ENCODE measurements at regions of chr1 and their contacts with region 1.

Region 1: DNA sequence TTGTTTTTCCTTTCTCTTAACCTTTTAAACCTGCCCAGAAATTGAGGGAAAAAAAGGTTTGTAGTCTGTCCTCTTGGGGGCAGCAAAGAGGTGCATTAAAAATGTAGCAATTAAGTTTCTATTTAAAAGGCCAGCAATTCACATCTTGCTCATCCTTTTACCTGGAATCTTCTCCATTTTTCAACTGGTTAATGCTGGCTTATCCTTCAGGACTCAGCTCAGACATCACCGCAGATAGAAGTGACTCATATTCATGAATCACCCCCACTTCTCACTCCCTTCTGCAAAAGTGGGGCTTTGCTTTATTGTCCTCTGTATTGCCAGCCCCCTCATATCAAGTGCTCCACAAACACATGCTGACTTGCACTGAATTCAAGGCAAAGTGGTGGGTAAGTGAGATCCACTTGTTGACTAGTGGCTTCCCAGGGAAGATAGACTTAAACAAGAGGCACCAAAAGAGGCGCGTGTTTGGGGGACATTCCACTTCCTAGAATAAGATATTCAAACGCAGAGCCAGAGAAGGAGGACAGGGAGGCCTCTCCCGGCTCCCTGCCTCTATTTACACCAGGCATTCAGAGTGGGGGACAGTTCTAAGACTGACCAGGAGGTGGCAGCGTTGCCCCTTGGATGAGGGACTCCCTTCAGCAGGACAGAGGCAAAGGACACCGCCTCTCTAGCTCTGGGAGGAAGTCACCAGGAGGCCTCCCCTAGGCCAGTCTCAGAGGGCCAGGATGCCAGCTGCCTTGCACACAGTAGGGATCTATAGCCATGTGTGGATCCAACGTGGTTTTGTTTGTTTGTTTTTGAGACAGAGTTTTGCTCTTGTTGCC is 23.2 kb upstream of the ZNF648 start:
- DNase-seq: peak; percentile 93
- H3K4me3 Mint-ChIP-seq: no peak overlapping the region
- H3K27ac Mint-ChIP-seq: no peak overlapping the region
- H3K4me1 Mint-ChIP-seq: peaks cover 15% of the 10 kb centered on the region
- H3K27me3 Mint-ChIP-seq: no peaks in the 10 kb centered on the region
- CTCF ChIP-seq: peak; percentile 93

Region 2: DNA sequence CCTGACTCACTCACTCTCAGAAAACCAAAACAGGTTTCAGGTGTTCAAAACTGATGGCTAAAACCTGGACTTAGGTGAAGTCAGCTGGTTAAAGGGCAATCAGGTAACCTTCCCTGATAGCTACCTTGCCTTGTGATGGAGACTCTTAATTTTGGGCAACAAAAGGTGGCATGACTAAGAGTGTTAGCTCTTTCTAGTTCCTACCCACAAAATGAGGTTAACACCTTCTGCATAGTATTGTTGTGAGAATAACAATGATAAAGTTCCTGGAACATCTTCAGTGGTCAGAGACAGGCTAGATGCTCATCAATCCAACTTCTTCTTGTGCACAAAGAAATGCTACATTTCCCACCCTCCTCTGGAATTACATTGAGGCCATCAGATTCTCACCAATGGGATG is 238.0 kb before region 1 on chr1:
- CTCF ChIA-PET with region 1: no interaction called
- intact Hi-C with region 1: no loop called
- DNase-seq: no peak
- H3K4me3 Mint-ChIP-seq: no peak overlapping the region
- H3K27ac Mint-ChIP-seq: no peak overlapping the region
- H3K4me1 Mint-ChIP-seq: no peaks in the 10 kb centered on the region
- H3K27me3 Mint-ChIP-seq: no peaks in the 10 kb centered on the region
- CTCF ChIP-seq: no peak

Region 3: GRCh38 chr1:181936768-181937581 is 147.7 kb before region 1 on chr1:
- CTCF ChIA-PET with region 1: interaction called, 12 read pairs
- intact Hi-C with region 1: no loop called
- DNase-seq: peak; percentile 73
- H3K4me3 Mint-ChIP-seq: no peak overlapping the region
- H3K27ac Mint-ChIP-seq: no peak overlapping the region
- H3K4me1 Mint-ChIP-seq: no peaks in the 10 kb centered on the region
- H3K27me3 Mint-ChIP-seq: no peaks in the 10 kb centered on the region
- CTCF ChIP-seq: peak; percentile 58

Region 4: DNA sequence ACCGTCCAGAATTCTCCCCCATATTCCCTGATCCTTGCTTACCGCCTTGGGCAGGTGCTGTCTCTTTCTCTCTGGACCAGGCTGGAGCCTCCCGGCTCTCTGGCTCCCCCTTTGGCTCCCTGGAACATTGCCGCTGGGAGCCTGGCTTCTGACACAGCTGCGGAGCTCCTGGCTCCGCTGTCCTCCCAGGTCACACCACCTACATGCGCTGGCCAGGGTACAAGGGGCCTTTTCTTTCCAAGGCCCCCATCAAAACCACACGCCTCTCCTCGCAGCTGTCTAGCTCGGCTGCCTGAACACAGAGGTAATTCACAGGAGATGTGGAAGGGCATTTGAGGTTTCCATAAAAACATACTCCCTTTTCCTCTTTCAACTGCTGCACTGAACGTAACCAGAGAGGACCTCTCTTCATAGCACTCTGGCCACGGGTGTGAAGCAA is 15.7 kb before region 1 on chr1:
- CTCF ChIA-PET with region 1: interaction called, 22 read pairs
- intact Hi-C with region 1: no loop called
- DNase-seq: peak; percentile 91
- H3K4me3 Mint-ChIP-seq: peak overlapping the region; percentile 18
- H3K27ac Mint-ChIP-seq: no peak overlapping the region
- H3K4me1 Mint-ChIP-seq: no peaks in the 10 kb centered on the region
- H3K27me3 Mint-ChIP-seq: peaks cover 23% of the 10 kb centered on the region
- CTCF ChIP-seq: peak; percentile 80

Region 5: DNA sequence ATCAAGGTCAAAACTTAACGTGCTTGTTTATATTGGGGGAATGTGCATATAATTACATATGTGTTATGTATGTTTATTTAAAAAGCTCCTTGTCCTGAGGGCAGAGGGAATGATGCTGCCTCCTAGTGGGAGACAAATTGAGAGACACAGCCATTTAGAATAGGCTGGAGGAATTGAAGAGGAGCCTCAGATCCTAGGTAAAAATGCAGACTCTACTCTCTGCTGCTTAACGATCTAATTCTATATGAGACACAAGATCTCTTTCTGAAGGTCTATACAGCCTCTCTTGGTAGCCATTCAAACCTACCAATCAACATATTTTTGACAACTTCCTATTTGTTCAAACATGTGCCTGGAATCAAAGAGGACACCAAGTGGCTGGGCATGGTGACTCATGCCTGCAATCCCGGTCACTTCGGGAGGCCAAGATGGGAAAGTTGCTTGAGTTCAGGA is 113.4 kb after region 1 on chr1:
- CTCF ChIA-PET with region 1: interaction called, 4 read pairs
- intact Hi-C with region 1: loop called (anchors 1 kb)
- DNase-seq: peak; percentile 16
- H3K4me3 Mint-ChIP-seq: no peak overlapping the region
- H3K27ac Mint-ChIP-seq: no peak overlapping the region
- H3K4me1 Mint-ChIP-seq: peaks cover 9% of the 10 kb centered on the region
- H3K27me3 Mint-ChIP-seq: no peaks in the 10 kb centered on the region
- CTCF ChIP-seq: no peak

Region 6: DNA sequence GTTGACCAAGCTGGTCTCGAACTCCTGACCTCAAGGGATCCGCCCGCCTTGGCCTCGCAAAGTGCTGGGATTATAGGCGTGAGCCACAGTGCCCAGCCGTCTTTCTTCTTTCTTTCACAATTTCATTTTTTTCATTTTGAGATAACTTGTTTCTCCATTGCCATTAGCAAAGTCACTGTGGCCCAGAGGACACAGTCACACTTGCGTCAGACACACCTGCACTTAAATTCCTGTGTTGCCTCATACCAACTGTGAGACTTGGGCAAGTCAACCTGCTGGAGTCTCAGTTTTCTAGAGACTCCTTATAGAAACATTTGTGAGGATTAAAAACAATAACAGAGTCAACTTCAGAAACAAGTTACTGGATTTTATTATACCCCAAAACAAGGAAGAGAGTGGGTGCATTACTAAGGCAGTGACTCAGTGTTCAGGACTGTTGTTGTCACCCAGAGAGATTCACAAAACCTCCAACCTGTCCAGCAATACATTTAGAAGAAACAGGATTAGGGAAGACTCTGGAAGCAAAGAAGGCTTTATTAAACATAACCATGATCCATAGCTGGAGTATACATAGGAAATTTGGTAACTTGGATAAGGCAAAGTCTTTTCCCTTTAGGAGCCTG is 313.2 kb after region 1 on chr1:
- CTCF ChIA-PET with region 1: interaction called, 29 read pairs
- intact Hi-C with region 1: loop called (anchors 1 kb)
- DNase-seq: peak; percentile 20
- H3K4me3 Mint-ChIP-seq: no peak overlapping the region
- H3K27ac Mint-ChIP-seq: peak overlapping the region; percentile 16
- H3K4me1 Mint-ChIP-seq: peaks cover 22% of the 10 kb centered on the region
- H3K27me3 Mint-ChIP-seq: no peaks in the 10 kb centered on the region
- CTCF ChIP-seq: no peak

Region 7: DNA sequence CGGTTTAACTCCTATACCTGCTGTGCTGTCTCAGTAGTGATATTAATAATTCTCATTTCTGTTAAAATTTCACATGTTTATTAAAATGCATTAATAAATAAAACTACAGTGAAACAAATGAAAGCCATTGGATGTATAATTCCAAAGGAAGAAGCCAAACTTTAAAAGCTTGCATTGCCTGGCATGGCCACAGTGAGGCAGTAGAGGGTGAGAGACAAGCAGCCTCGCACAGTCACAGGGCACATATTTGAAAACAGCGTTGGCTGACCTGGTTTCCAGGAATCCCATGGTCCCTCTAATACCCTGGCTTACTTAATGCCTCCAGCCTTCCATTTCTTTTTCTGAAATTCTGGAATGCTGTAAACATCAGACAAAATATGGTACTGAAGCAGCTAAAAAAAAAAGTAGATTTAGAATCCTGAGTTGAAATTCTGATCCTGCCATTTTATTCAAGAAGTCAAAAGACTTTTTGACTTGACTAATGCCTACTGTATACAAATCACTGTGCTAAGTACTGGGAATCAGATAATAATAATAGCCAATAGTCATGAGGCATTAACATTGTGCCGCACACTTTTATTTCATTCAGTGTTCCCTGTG is 511.0 kb after region 1 on chr1:
- CTCF ChIA-PET with region 1: interaction called, 4 read pairs
- intact Hi-C with region 1: loop called (anchors 2 kb)
- DNase-seq: peak; percentile 78
- H3K4me3 Mint-ChIP-seq: no peak overlapping the region
- H3K27ac Mint-ChIP-seq: no peak overlapping the region
- H3K4me1 Mint-ChIP-seq: no peaks in the 10 kb centered on the region
- H3K27me3 Mint-ChIP-seq: peaks cover 49% of the 10 kb centered on the region
- CTCF ChIP-seq: peak; percentile 85

Measured in Calu3 (cell line).